ENCODE measurements at regions of chr6 and their contacts with region 1.

Region 1: GRCh38 chr6:141483598-141484061 is 649.1 kb upstream of the GJE1 start:
- DNase-seq: peak; percentile 76 to 85 (median 83)
- H3K4me3 ChIP-seq: peak overlapping the region in 1 of 2 donors; percentile 8
- H3K4me3 Mint-ChIP-seq: peak overlapping the region; percentile 76 to 94 (median 86)
- H3K27ac ChIP-seq: peak overlapping the region; percentile 72
- H3K27ac Mint-ChIP-seq: peak overlapping the region; percentile 82 to 96 (median 95)
- H3K4me1 ChIP-seq: peaks cover 30% of the 10 kb centered on the region
- H3K4me1 Mint-ChIP-seq: peaks cover 29 to 50% (median 32%) of the 10 kb centered on the region in 4 donors
- H3K27me3 ChIP-seq: no peaks in the 10 kb centered on the region
- H3K27me3 Mint-ChIP-seq: no peaks in the 10 kb centered on the region

Region 2: GRCh38 chr6:141307309-141307998 is 176.2 kb before region 1 on chr6:
- CTCF ChIA-PET with region 1: no interaction called
- POLR2A ChIA-PET with region 1: no interaction called
- intact Hi-C with region 1: no loop called
- DNase-seq: peak in 2 of 5 donors; percentile 9 to 43
- H3K4me3 ChIP-seq: no peak overlapping the region
- H3K4me3 Mint-ChIP-seq: no peak overlapping the region
- H3K27ac ChIP-seq: no peak overlapping the region
- H3K27ac Mint-ChIP-seq: no peak overlapping the region
- H3K4me1 ChIP-seq: no peaks in the 10 kb centered on the region
- H3K4me1 Mint-ChIP-seq: no peaks in the 10 kb centered on the region
- H3K27me3 ChIP-seq: no peaks in the 10 kb centered on the region
- H3K27me3 Mint-ChIP-seq: peaks cover 0 to 2% of the 10 kb centered on the region in 2 donors

Region 3: DNA sequence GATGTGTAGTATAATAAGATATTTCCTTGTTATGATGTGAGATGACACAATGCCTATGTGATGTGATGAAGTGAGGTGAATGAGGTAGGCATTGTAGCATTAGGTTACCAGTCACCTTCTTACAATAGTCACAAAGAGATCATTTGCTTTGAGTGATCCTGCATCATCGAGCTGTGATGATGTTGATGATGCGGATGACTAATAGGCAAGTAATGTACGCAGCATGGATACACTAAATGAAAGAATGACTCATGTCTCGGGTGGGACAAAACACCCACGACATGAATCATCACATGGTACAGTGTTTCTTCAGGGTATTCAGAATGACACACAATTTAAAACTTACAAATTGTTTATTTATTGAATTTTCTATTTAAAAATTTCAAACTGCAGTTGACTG is 157.2 kb before region 1 on chr6:
- CTCF ChIA-PET with region 1: no interaction called
- POLR2A ChIA-PET with region 1: interaction called, 3 read pairs
- intact Hi-C with region 1: loop called (anchors 5 kb)
- DNase-seq: peak; percentile 23 to 86 (median 39)
- H3K4me3 ChIP-seq: no peak overlapping the region
- H3K4me3 Mint-ChIP-seq: peak overlapping the region; percentile 27 to 85 (median 68)
- H3K27ac ChIP-seq: no peak overlapping the region
- H3K27ac Mint-ChIP-seq: peak overlapping the region in 3 of 7 donors; percentile 15 to 45 (median 19)
- H3K4me1 ChIP-seq: no peaks in the 10 kb centered on the region
- H3K4me1 Mint-ChIP-seq: peaks cover 6 to 11% (median 9%) of the 10 kb centered on the region in 4 donors
- H3K27me3 ChIP-seq: no peaks in the 10 kb centered on the region
- H3K27me3 Mint-ChIP-seq: no peaks in the 10 kb centered on the region

Region 4: DNA sequence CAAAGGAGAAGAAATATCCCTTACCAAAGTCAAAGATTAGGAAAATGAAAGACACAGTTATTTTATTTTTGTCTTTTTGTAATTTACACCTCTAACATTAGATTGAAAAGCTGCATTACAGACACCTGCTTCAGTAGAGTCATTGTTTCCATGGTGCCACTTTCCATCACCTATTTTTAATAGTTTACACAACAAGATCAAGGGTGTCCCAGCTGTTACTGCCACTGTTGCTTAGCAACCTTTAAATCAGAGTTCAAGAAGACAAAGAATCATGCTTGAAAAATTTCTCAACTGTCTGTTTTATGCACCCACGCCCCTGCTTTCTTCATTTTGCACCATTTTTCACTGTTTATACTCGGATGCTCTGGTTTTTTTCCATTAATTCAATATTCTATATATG is 19.1 kb before region 1 on chr6:
- CTCF ChIA-PET with region 1: no interaction called
- POLR2A ChIA-PET with region 1: interaction called, 3 read pairs
- intact Hi-C with region 1: loop called (anchors 2 kb)
- DNase-seq: peak; percentile 16 to 53 (median 37)
- H3K4me3 ChIP-seq: no peak overlapping the region
- H3K4me3 Mint-ChIP-seq: peak overlapping the region in 1 of 8 donors; percentile 8
- H3K27ac ChIP-seq: no peak overlapping the region
- H3K27ac Mint-ChIP-seq: peak overlapping the region in 1 of 7 donors; percentile 24
- H3K4me1 ChIP-seq: peaks cover 6% of the 10 kb centered on the region
- H3K4me1 Mint-ChIP-seq: peaks cover 4 to 11% (median 8%) of the 10 kb centered on the region in 4 donors
- H3K27me3 ChIP-seq: no peaks in the 10 kb centered on the region
- H3K27me3 Mint-ChIP-seq: no peaks in the 10 kb centered on the region

Region 5: GRCh38 chr6:141513830-141514229 is 30.2 kb after region 1 on chr6:
- CTCF ChIA-PET with region 1: no interaction called
- POLR2A ChIA-PET with region 1: interaction called, 4 read pairs
- intact Hi-C with region 1: loop called (anchors 2 kb)
- DNase-seq: peak in 3 of 5 donors; percentile 2 to 13 (median 6)
- H3K4me3 ChIP-seq: no peak overlapping the region
- H3K4me3 Mint-ChIP-seq: peak overlapping the region; percentile 27 to 79 (median 53)
- H3K27ac ChIP-seq: no peak overlapping the region
- H3K27ac Mint-ChIP-seq: peak overlapping the region in 1 of 7 donors; percentile 33
- H3K4me1 ChIP-seq: peaks cover 5% of the 10 kb centered on the region
- H3K4me1 Mint-ChIP-seq: peaks cover 0 to 9% (median 7%) of the 10 kb centered on the region in 4 donors
- H3K27me3 ChIP-seq: no peaks in the 10 kb centered on the region
- H3K27me3 Mint-ChIP-seq: no peaks in the 10 kb centered on the region

Region 6: DNA sequence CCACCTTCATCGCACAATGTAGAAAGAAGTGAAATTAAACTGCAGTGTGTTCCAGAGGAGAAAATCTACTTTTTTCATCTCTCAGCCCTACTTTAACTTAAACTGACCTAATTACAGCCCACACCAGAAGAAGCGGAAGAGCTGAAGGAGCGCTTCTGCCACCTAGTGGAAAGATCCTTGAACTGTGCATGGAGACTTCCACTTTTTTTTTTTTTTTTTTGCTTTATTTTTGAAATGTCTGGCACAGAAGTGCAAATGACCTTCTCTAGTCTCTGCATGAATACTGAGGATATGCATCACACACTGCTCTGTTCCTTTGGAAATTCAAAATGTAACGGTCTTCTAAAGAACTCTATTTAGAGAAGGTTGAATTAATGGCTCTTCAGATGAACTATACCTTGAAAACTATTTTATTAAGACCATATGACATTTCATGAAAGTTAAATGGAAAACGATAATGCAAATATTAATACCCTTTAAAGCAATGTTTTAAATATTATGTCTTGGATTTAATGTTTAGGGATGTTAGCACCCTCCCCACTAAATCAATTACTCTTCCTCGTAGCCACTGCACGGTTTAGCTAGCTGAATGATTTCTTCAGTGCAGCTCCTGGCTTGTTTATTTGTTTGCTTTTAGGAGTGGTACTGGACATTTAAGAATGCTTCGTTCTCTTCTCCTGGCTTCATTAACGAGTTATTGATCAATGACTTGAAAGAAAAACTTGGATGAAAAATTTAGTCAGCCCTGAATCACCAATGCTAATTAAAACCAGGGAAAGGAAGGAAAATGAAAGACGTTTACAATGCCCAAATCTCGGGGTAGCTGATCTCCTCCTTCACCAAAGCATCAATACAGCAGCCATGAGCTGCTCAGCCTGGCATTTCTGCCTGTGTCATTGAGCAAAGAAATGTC is 79.5 kb after region 1 on chr6:
- CTCF ChIA-PET with region 1: interaction called, 11 read pairs
- POLR2A ChIA-PET with region 1: no interaction called
- intact Hi-C with region 1: loop called (anchors 1 kb)
- DNase-seq: peak; percentile 66 to 77 (median 74)
- H3K4me3 ChIP-seq: peak overlapping the region; percentile 7 to 56
- H3K4me3 Mint-ChIP-seq: peak overlapping the region; percentile 77 to 94 (median 88)
- H3K27ac ChIP-seq: no peak overlapping the region
- H3K27ac Mint-ChIP-seq: peak overlapping the region; percentile 0 to 95 (median 76)
- H3K4me1 ChIP-seq: peaks cover 5% of the 10 kb centered on the region
- H3K4me1 Mint-ChIP-seq: peaks cover 4 to 16% (median 12%) of the 10 kb centered on the region in 4 donors
- H3K27me3 ChIP-seq: no peaks in the 10 kb centered on the region
- H3K27me3 Mint-ChIP-seq: peaks cover 0 to 2% of the 10 kb centered on the region in 2 donors

Region 7: DNA sequence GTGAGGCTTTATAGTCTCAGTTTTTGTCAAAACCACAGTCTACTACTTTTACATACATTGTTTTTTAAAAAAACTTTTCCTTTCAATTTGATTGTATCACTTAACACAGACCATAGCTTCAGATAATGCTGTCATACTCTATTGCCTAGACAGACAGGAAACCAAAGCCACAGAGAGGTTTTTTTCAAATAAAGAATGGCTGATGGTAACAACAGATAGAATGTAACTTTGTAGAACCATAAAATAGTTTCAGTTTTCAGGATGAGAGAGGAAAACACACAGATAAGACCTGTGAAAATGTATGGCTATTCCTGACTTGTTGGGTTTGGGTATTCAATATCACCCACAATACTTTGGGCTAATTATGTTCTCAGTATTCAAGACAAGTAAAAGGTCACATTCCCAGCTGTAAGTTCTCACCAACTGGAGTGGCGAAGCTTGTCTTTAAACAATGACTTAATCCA is 912.2 kb after region 1 on chr6:
- CTCF ChIA-PET with region 1: no interaction called
- POLR2A ChIA-PET with region 1: no interaction called
- intact Hi-C with region 1: loop called (anchors 10 kb)
- DNase-seq: peak; percentile 42 to 84 (median 80)
- H3K4me3 ChIP-seq: no peak overlapping the region
- H3K4me3 Mint-ChIP-seq: peak overlapping the region; percentile 14 to 69 (median 51)
- H3K27ac ChIP-seq: peak overlapping the region; percentile 15
- H3K27ac Mint-ChIP-seq: peak overlapping the region; percentile 54 to 97 (median 78)
- H3K4me1 ChIP-seq: peaks cover 15% of the 10 kb centered on the region
- H3K4me1 Mint-ChIP-seq: peaks cover 14 to 25% (median 17%) of the 10 kb centered on the region in 4 donors
- H3K27me3 ChIP-seq: no peaks in the 10 kb centered on the region
- H3K27me3 Mint-ChIP-seq: peaks cover 1 to 6% of the 10 kb centered on the region in 2 donors

Measured in CD4-positive, alpha-beta memory T cell (primary cell).